Activated CD4-positive, alpha-beta T cell treated with anti-CD3 and anti-CD28 coated beads for 36 hours (primary cell): ENCODE measurements at regions of chr5 and their contacts with region 1.

Region 1: GRCh38 chr5:177425801-177426565 is 493 bp upstream of the GRK6 start:
- DNase-seq: peak; percentile 100
- ATAC-seq: peak; percentile 77
- H3K4me3 Mint-ChIP-seq: peak overlapping the region; percentile 81
- H3K27ac Mint-ChIP-seq: peak overlapping the region; percentile 94
- H3K4me1 Mint-ChIP-seq: peaks cover 36% of the 10 kb centered on the region
- H3K27me3 Mint-ChIP-seq: no peaks in the 10 kb centered on the region

Region 2: GRCh38 chr5:177006265-177006972 is 419.6 kb before region 1 on chr5 and contains the start of gene UIMC1:
- CTCF ChIA-PET with region 1: no interaction called
- POLR2A ChIA-PET with region 1: no interaction called
- intact Hi-C with region 1: loop called in 1 of 2 experiments (anchors 5 kb)
- DNase-seq: peak; percentile 96
- ATAC-seq: peak; percentile 90
- H3K4me3 Mint-ChIP-seq: peak within 1 kb of the TSS; percentile 87
- H3K27ac Mint-ChIP-seq: peak within 1 kb of the TSS; percentile 96
- H3K4me1 Mint-ChIP-seq: peaks cover 26% of the 10 kb centered on the region
- H3K27me3 Mint-ChIP-seq: no peaks in the 10 kb centered on the region
- total RNA-seq, gene UIMC1: 50.4 to 53.4 TPM

Region 3: GRCh38 chr5:177311723-177312648 is 114.0 kb before region 1 on chr5 and contains the start of gene MXD3:
- CTCF ChIA-PET with region 1: interaction called, 3 read pairs
- POLR2A ChIA-PET with region 1: interaction called, 5 read pairs
- intact Hi-C with region 1: loop called (anchors 1 kb)
- DNase-seq: peak; percentile 99
- ATAC-seq: peak; percentile 88
- H3K4me3 Mint-ChIP-seq: peak within 1 kb of the TSS; percentile 85
- H3K27ac Mint-ChIP-seq: peak within 1 kb of the TSS; percentile 84
- H3K4me1 Mint-ChIP-seq: peaks cover 28% of the 10 kb centered on the region
- H3K27me3 Mint-ChIP-seq: no peaks in the 10 kb centered on the region
- total RNA-seq, gene MXD3: 21.3 to 27.2 TPM

Region 4: DNA sequence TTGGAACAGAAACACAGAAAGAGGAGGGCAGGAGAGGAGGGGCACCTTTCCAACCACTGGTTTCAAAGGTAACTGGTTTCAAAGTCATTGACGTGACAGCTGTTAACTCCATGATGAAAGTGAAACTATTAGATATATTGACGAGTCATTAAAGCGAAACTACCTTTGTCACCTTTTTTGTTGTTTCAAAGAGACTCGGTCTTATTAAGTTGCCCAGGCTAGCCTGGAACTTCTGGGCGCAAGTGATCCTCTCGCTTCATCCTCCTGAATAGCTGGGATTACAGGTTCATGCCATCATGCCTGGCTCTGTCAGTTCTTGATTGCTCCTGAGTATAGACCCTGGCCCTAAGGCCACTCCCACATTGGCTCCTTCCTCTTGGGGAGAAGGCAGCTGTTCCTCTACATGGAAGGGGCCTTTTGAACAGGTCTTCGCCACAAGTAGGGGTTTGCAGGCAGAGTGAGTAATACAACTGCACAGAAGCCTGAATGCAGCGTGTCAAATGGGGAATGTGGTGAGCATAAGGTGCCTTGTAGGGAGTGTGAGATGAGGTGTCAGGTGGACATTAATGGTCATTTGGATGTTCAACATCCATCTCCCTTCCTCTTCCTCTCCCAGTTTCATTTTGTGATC is 13.3 kb before region 1 on chr5:
- CTCF ChIA-PET with region 1: interaction called, 10 read pairs
- POLR2A ChIA-PET with region 1: interaction called, 6 read pairs
- intact Hi-C with region 1: no loop called
- DNase-seq: peak; percentile 33
- ATAC-seq: peak; percentile 80
- H3K4me3 Mint-ChIP-seq: no peak overlapping the region
- H3K27ac Mint-ChIP-seq: peak overlapping the region; percentile 55
- H3K4me1 Mint-ChIP-seq: peaks cover 36% of the 10 kb centered on the region
- H3K27me3 Mint-ChIP-seq: no peaks in the 10 kb centered on the region

Region 5: DNA sequence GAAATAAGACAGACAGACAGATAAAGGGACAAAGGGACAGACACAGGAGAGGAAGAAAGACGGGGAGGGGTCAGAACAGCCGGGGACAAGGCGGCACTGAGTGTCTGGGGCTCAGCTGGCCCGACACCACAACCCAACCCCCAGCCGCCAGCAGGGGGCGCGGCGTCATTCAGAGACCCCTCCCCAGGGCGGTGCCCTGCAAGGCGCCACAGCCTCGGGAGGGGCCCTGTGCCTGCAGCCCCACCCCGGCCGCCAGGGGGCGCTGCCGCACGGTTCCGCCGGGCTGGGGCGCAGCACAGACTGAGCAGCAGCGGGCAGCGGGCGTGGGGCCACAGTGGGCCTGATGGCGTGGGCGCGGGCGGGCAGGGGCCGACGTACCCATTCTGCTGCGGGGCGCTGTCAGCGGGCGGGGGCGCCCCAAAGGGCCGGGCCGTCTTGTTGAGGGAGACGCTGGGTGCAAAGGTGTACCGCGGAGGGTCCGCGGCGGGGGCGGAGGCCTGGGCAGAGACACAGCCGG is 65.5 kb after region 1 on chr5:
- CTCF ChIA-PET with region 1: no interaction called
- POLR2A ChIA-PET with region 1: no interaction called
- intact Hi-C with region 1: no loop called
- DNase-seq: peak; percentile 73
- ATAC-seq: peak; percentile 40
- H3K4me3 Mint-ChIP-seq: no peak overlapping the region
- H3K27ac Mint-ChIP-seq: no peak overlapping the region
- H3K4me1 Mint-ChIP-seq: peaks cover 21% of the 10 kb centered on the region
- H3K27me3 Mint-ChIP-seq: no peaks in the 10 kb centered on the region

Region 6: DNA sequence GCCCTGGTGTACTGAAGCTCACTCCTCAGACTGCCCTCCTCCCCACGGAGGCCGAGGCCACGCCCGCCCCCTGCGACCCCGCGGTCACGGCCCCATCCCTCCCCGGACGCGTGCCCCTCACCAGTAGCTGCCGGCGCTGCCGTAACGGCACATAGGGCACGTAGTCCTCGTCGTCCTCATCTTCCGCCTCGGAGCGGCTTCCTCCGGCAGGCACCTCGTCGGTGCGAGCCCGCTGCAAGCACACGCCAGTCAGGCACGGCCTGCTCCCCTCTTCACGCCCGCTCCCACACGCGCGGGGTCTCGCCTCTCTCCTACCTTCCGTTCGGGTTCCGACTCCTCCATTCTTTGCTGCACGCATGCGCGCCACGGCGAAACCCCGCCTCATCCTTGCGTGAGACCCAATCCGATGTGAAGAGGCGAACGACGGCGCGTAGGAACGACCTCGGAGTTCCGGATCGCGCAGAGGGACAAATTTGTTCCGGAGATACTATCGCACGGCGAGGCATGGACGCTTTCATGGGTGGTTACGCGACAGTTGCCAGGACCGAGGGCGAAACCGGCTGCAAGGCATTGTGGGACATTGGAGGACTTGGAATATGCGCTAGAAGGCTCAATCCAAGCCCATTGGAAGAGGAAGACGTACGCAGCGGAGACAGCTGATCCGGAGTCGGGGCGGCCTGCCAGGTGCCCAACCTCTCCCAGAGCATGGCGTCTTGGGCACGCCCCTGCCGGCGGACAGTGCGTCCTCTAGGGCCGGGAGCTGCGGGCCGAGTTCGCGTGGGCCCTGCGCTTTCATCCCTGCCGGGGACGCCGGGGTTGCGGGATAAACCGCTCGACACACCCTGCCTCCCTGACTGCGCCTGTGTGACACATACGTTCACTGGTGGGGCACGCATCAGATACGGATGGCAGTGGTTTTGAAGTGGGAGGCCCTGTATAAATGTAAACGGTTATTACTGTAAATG is 90.9 kb after region 1 on chr5 and contains the start of gene DDX41:
- CTCF ChIA-PET with region 1: no interaction called
- POLR2A ChIA-PET with region 1: no interaction called
- intact Hi-C with region 1: loop called in 1 of 2 experiments (anchors 1 kb)
- DNase-seq: peak; percentile 98
- ATAC-seq: peak; percentile 91
- H3K4me3 Mint-ChIP-seq: peak within 1 kb of the TSS; percentile 98
- H3K27ac Mint-ChIP-seq: peak within 1 kb of the TSS; percentile 96
- H3K4me1 Mint-ChIP-seq: peaks cover 48% of the 10 kb centered on the region
- H3K27me3 Mint-ChIP-seq: no peaks in the 10 kb centered on the region
- total RNA-seq, gene DDX41: 192 to 197 TPM